ENCODE measurements at regions of chr7 and their contacts with region 1.

Region 1: GRCh38 chr7:47818796-47819606 is 129.3 kb downstream of the PKD1L1 start:
- DNase-seq: peak; percentile 76 to 86
- H3K4me3 ChIP-seq: no peak overlapping the region
- H3K27ac ChIP-seq: no peak overlapping the region
- H3K4me1 ChIP-seq: no peaks in the 10 kb centered on the region
- H3K27me3 ChIP-seq: no peaks in the 10 kb centered on the region
- CTCF ChIP-seq: peak; percentile 81 to 99 (median 91)
- POLR2A ChIP-seq: no peak

Region 2: GRCh38 chr7:47266131-47266706 is 552.8 kb before region 1 on chr7:
- intact Hi-C with region 1: loop called (anchors 5 kb)
- DNase-seq: peak; percentile 54 to 65
- H3K4me3 ChIP-seq: no peak overlapping the region
- H3K27ac ChIP-seq: peak overlapping the region in 1 of 3 donors; percentile 42
- H3K4me1 ChIP-seq: peaks cover 0 to 6% of the 10 kb centered on the region in 2 donors
- H3K27me3 ChIP-seq: no peaks in the 10 kb centered on the region
- CTCF ChIP-seq: peak; percentile 88 to 97 (median 94)
- POLR2A ChIP-seq: no peak

Region 3: GRCh38 chr7:47435889-47436312 is 383.1 kb before region 1 on chr7:
- intact Hi-C with region 1: loop called (anchors 5 kb)
- DNase-seq: peak; percentile 75 to 81
- H3K4me3 ChIP-seq: no peak overlapping the region
- H3K27ac ChIP-seq: no peak overlapping the region
- H3K4me1 ChIP-seq: no peaks in the 10 kb centered on the region
- H3K27me3 ChIP-seq: no peaks in the 10 kb centered on the region
- CTCF ChIP-seq: peak; percentile 21 to 81 (median 72)
- POLR2A ChIP-seq: no peak

Region 4: GRCh38 chr7:47669061-47669891 is 149.7 kb before region 1 on chr7:
- intact Hi-C with region 1: no loop called
- DNase-seq: peak; percentile 97 to 99
- H3K4me3 ChIP-seq: no peak overlapping the region
- H3K27ac ChIP-seq: peak overlapping the region; percentile 84 to 93 (median 90)
- H3K4me1 ChIP-seq: peaks cover 14 to 18% of the 10 kb centered on the region in 2 donors
- H3K27me3 ChIP-seq: no peaks in the 10 kb centered on the region
- CTCF ChIP-seq: peak in 4 of 6 experiments; percentile 2 to 57 (median 30)
- POLR2A ChIP-seq: peak in 1 of 2 donors; percentile 21

Region 5: GRCh38 chr7:48154792-48155413 is 335.9 kb after region 1 on chr7:
- intact Hi-C with region 1: no loop called
- DNase-seq: peak in 1 of 2 donors; percentile 10
- H3K4me3 ChIP-seq: no peak overlapping the region
- H3K27ac ChIP-seq: no peak overlapping the region
- H3K4me1 ChIP-seq: peaks cover 0 to 5% of the 10 kb centered on the region in 2 donors
- H3K27me3 ChIP-seq: no peaks in the 10 kb centered on the region
- CTCF ChIP-seq: peak in 3 of 6 experiments; percentile 17 to 34 (median 24)
- POLR2A ChIP-seq: no peak